ENCODE measurements at regions of chr4 and their contacts with region 1.

Region 1: GRCh38 chr4:39285111-39285795 is 80.9 kb downstream of the RFC1 start:
- DNase-seq: no peak
- H3K4me3 ChIP-seq: no peak overlapping the region
- H3K27ac ChIP-seq: no peak overlapping the region
- H3K4me1 ChIP-seq: no peaks in the 10 kb centered on the region
- CTCF ChIP-seq: no peak

Region 2: DNA sequence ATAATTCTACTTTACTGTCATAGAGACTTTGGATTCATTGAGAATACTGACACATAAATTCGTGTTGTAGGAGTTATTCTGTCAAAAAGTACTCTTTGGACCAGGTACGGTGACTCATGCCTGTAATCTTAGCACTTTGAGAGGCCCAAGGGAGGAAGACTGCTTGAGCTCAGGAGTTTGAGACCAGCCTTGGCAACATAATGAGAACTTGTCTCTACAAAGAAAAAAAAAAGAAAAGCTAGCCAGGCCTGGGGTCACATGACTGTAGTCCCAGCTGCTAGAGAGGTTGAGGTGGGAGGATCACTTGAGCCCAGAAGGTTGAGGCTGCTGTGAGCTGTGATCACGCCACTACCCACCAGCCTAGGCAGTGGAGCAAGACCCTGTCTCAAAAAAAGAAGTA is 48.1 kb before region 1 on chr4:
- CTCF ChIA-PET with region 1: no interaction called
- POLR2A ChIA-PET with region 1: no interaction called
- intact Hi-C with region 1: no loop called
- DNase-seq: no peak
- H3K4me3 ChIP-seq: no peak overlapping the region
- H3K27ac ChIP-seq: no peak overlapping the region
- H3K4me1 ChIP-seq: no peaks in the 10 kb centered on the region
- CTCF ChIP-seq: no peak

Region 3: DNA sequence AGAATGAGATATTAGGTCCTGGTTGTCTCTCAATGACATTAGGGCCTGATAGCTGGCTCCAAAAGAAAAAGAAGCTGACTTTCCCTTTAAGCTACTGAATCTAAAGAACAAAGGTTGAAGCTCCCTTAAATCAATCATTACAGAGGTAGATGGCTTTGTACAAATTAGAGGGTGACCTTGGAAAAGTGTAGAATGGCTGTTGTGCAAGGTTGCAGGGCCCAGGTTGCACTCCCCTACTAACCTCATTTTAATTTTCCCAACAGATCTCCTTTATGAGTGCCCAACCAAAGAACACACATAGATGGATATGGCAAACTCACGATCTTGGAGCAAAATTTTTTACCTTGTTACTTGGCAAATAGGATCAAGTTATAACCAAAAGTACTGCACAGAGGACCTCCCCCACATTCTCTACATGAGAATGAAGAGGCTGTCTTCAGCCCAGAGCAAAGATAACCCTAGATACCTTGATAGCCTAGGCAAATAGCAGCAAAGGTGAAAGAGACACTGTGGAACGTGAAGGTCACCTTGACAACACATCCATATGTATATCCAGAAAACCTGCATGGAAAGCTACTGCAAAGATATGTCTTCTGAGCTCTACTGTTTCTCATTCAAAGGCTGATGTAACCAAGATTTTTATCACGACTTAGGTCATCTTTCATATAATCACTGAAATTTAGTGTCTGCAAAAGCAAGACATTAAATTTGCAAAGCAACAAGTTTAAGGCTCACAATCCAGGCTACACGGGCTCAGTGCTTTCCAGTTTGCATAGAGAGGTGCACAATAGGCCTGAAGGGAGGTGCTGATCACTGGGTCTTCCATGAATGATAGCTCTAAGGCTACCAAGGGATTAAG is 144.5 kb after region 1 on chr4:
- CTCF ChIA-PET with region 1: no interaction called
- POLR2A ChIA-PET with region 1: no interaction called
- intact Hi-C with region 1: loop called (anchors 10 kb)
- DNase-seq: no peak
- H3K4me3 ChIP-seq: no peak overlapping the region
- H3K27ac ChIP-seq: no peak overlapping the region
- H3K4me1 ChIP-seq: no peaks in the 10 kb centered on the region
- CTCF ChIP-seq: no peak